ENCODE measurements at regions of chr17 and their contacts with region 1.

Region 1: DNA sequence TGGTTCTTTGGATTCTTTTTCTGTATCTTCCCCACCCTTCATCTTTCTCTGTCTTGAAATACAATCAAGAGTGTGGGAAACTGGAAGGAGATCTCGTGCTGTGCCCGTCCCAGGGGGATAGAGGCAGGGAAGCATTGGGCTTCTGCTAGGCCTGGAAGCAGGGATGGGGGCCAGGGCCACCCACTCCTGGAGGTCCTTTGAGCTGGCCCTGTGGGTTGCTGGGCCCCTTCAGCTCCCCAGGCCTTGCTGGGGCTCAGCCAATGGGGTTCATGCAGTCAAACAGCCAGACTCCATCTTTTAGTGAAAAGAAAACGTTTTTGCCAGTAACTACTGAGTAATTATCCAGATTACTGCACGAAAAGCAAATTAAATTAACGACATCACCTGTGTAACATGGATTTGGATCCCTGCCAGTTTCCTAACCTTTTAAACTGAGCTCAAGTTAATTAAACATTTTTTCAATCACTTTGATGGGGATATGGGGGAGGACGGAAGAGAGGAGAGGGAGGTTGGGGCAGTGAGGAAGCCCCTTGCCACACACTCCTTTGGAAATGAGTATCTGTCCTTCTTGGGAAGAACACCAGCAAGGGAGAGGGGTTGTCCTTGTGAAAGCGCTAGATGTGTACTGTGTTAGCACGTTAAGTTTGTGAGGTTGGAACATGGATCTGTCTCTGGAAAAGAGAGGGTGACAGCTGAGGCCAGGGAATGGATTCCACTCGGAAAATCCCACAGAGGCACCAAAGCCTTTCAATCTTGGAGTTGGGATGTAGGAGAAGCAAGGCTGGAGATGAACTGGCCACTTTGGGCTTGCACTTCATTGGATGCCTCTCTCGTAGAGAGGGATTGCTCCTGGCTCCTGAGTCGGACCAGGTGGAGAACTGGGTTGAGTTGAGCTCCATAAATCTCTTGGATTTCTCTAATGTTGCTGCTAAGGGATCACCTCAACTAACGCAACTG is 67.5 kb downstream of the CCDC182 start:
- DNase-seq: no peak
- H3K4me3 ChIP-seq: no peak overlapping the region
- H3K27ac ChIP-seq: no peak overlapping the region
- H3K4me1 ChIP-seq: peaks cover 14% of the 10 kb centered on the region
- CTCF ChIP-seq: no peak

Region 2: DNA sequence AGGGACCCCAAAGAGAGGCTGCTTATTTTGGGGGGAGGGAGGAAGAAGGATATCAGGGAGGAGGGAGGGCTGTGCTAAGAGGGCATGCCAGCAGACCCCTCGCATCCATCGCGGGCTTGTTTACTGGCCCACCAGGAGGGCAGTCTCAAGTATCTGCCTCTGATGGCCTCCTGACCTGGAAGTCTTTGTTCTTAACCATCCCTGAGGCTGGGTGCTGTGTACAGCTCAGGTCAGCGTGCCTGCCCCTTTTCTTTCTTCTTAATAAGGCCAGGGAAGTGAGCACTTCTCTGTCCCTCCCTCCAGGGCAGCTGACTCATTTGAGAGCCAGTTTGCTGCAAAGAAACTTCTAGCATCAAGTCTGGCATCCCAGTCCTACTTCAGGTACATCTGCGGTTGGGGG is 89.5 kb before region 1 on chr17:
- CTCF ChIA-PET with region 1: interaction called, 3 read pairs
- POLR2A ChIA-PET with region 1: interaction called, 11 read pairs
- intact Hi-C with region 1: no loop called
- DNase-seq: no peak
- H3K4me3 ChIP-seq: no peak overlapping the region
- H3K27ac ChIP-seq: no peak overlapping the region
- H3K4me1 ChIP-seq: peaks cover 11% of the 10 kb centered on the region
- CTCF ChIP-seq: no peak

Measured in OCI-LY7 (cell line).